Activated CD4-positive, alpha-beta T cell treated with anti-CD3 and anti-CD28 coated beads, Interleukin-2, amount 10 ng/mL, durations not matched to agents 7 days and 5 days (primary cell): ENCODE measurements at regions of chr20 and their contacts with region 1.

Region 1: DNA sequence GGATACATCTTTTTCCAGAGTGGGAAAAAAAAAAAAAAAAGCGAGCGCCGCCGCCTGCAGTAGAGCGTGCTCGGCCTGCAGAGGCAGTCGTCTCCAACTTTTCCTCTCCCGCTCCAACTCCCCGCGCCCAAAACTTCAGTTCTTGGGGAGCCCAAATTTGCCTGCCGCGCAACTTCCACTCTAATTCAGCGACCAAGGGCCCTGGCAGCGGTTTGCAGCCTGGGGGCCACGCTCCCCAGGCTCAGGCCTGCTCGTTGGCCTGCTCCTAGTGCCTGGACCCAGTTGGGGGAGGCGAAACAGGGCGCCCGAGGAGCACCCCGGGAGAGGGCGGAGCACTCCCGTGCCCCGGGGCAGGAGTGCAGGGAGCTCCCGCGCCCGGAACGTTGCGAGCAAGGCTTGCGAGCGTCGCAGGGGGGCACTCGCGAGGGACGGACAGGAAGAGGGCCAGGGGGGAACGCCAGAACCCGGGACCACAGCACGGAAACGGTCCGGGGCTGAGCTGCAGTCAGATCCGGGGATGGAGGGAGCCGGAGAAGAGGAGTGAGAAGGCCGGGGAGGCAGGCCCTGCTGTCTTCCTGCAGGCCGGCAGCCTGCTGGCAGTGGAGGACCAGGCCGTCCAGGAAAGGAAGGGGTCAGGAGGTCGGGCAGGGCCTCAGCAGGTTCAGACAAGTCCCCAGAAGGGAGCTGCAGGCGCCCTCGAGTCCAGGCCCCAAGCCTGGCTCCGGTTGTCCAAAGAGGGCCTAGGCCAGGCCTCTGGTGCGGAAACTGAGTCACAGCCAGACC is at the start of gene STX16:
- DNase-seq: peak; percentile 88
- H3K4me3 Mint-ChIP-seq: peak within 1 kb of the TSS; percentile 90
- H3K27ac Mint-ChIP-seq: peak within 1 kb of the TSS; percentile 99
- H3K4me1 Mint-ChIP-seq: peaks cover 22% of the 10 kb centered on the region
- H3K27me3 Mint-ChIP-seq: no peaks in the 10 kb centered on the region
- total RNA-seq, gene STX16: 163 to 173 TPM

Region 2: GRCh38 chr20:58667975-58668374 is 17.0 kb after region 1 on chr20:
- CTCF ChIA-PET with region 1: interaction called, 10 read pairs
- POLR2A ChIA-PET with region 1: no interaction called
- DNase-seq: no peak
- H3K4me3 Mint-ChIP-seq: no peak overlapping the region
- H3K27ac Mint-ChIP-seq: no peak overlapping the region
- H3K4me1 Mint-ChIP-seq: peaks cover 40% of the 10 kb centered on the region
- H3K27me3 Mint-ChIP-seq: no peaks in the 10 kb centered on the region

Region 3: GRCh38 chr20:58850693-58851174 is 199.8 kb after region 1 on chr20 and contains the start of gene GNAS-AS1:
- CTCF ChIA-PET with region 1: interaction called, 19 read pairs
- POLR2A ChIA-PET with region 1: no interaction called
- DNase-seq: peak; percentile 81
- H3K4me3 Mint-ChIP-seq: peak within 1 kb of the TSS; percentile 85
- H3K27ac Mint-ChIP-seq: no peak within 1 kb of the TSS
- H3K4me1 Mint-ChIP-seq: peaks cover 49% of the 10 kb centered on the region
- H3K27me3 Mint-ChIP-seq: peaks cover 59% of the 10 kb centered on the region
- total RNA-seq, gene GNAS-AS1: 0.96 to 1.5 TPM

Region 4: GRCh38 chr20:58864350-58864749 is 213.4 kb after region 1 on chr20:
- CTCF ChIA-PET with region 1: interaction called, 11 read pairs
- POLR2A ChIA-PET with region 1: no interaction called
- DNase-seq: no peak
- H3K4me3 Mint-ChIP-seq: no peak overlapping the region
- H3K27ac Mint-ChIP-seq: no peak overlapping the region
- H3K4me1 Mint-ChIP-seq: no peaks in the 10 kb centered on the region
- H3K27me3 Mint-ChIP-seq: peaks cover 22% of the 10 kb centered on the region